Activated B cell treated with CpG ODN at 0.5 μM for 24 hours (primary cell): ENCODE measurements at regions of chr22 and their contacts with region 1.

Region 1: DNA sequence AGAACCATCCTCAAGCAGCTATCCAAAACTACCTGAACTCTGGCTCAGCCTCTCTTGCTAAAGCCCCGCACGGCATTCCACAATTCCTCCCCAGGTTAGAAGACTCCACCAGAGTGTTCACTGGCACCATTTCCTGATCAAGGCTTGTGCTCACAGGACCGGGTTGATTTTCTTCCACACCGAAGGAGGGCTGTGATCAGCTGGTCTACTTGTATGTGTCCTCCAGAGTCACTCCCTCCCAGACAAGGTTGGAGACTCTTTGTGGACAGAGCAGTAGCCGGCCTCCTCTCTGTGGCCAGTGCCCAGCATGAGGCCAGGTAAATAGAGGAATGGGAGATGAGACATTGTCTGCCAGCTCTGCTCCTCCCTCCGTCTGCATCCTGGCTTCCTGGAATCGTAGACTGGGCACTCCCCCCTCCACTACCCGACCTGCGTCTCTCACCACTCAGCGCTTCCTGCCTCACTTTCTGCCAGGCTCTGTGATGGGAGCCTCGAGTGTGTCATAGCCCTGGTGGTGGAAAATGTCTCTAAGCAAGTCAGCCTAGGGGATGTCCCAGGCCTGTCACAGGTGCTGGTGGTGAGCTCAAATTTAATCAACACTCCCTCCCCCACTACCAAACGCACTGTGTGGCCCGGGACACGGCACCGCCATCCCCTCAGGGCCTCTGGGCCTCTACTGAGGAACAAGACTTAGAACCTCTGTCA is 12.5 kb upstream of the TMPRSS6 start:
- DNase-seq: peak; percentile 62
- ATAC-seq: peak; percentile 92
- H3K4me3 Mint-ChIP-seq: peak overlapping the region; percentile 76
- H3K27ac Mint-ChIP-seq: peak overlapping the region; percentile 94
- H3K4me1 Mint-ChIP-seq: peaks cover 44% of the 10 kb centered on the region
- H3K27me3 Mint-ChIP-seq: no peaks in the 10 kb centered on the region
- CTCF ChIP-seq: no peak

Region 2: DNA sequence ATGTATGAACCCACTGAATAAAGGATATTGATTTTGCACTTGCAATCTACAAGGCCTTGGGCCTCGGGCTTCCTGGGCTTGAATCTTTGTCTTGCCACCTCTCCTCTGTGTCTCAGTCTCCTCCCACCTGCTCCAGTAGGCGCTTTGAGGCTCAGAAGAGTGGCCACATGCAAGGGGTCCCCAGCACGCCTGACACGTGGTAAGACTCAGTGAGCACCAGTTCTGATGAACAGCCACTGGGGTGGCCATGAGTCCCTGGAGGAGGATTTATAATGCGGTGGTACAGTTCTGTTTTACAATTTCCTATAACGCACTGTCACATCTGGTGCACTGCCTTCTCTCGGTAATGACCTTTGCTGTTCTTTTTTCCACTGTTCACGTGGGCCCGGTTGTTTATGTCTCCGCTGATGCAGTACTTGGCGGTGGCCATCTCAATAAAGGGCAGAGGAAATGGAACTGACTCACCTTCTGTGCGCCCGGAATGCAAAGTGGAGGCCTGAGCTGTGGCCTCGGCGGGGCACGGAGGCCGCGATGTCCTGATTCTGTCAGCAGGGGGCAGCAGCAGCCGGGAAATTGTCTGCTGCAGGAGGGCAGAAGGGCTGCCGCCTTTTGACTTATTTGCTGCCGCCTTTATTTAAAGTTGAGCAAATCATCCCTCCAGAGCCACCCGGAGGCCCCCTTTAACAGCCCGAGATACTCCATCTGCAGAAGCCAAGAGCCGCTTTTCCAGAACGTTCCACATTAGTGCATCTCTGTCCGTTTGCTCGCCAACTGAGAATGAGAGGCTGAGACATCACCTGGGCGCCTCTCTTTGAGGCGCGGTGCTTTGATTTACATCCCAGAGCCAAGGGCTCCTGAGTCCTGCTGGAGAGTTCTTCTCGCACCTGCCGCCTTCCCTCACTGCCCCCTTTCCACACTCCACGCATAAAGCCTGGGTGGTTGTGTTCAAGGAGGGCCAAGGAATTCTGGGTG is 340.1 kb before region 1 on chr22:
- CTCF ChIA-PET with region 1: no interaction called
- POLR2A ChIA-PET with region 1: no interaction called
- intact Hi-C with region 1: loop called (anchors 1 kb)
- DNase-seq: peak; percentile 87
- ATAC-seq: peak; percentile 98
- H3K4me3 Mint-ChIP-seq: peak overlapping the region; percentile 41
- H3K27ac Mint-ChIP-seq: peak overlapping the region; percentile 77
- H3K4me1 Mint-ChIP-seq: peaks cover 14% of the 10 kb centered on the region
- H3K27me3 Mint-ChIP-seq: peaks cover 3% of the 10 kb centered on the region
- CTCF ChIP-seq: peak; percentile 97

Region 3: GRCh38 chr22:37088108-37088605 is 33.9 kb before region 1 on chr22:
- CTCF ChIA-PET with region 1: interaction called, 6 read pairs
- POLR2A ChIA-PET with region 1: interaction called, 16 read pairs
- intact Hi-C with region 1: no loop called
- DNase-seq: no peak
- ATAC-seq: peak; percentile 55
- H3K4me3 Mint-ChIP-seq: peak overlapping the region; percentile 16
- H3K27ac Mint-ChIP-seq: peak overlapping the region; percentile 50
- H3K4me1 Mint-ChIP-seq: peaks cover 13% of the 10 kb centered on the region
- H3K27me3 Mint-ChIP-seq: peaks cover 7% of the 10 kb centered on the region
- CTCF ChIP-seq: no peak

Region 4: DNA sequence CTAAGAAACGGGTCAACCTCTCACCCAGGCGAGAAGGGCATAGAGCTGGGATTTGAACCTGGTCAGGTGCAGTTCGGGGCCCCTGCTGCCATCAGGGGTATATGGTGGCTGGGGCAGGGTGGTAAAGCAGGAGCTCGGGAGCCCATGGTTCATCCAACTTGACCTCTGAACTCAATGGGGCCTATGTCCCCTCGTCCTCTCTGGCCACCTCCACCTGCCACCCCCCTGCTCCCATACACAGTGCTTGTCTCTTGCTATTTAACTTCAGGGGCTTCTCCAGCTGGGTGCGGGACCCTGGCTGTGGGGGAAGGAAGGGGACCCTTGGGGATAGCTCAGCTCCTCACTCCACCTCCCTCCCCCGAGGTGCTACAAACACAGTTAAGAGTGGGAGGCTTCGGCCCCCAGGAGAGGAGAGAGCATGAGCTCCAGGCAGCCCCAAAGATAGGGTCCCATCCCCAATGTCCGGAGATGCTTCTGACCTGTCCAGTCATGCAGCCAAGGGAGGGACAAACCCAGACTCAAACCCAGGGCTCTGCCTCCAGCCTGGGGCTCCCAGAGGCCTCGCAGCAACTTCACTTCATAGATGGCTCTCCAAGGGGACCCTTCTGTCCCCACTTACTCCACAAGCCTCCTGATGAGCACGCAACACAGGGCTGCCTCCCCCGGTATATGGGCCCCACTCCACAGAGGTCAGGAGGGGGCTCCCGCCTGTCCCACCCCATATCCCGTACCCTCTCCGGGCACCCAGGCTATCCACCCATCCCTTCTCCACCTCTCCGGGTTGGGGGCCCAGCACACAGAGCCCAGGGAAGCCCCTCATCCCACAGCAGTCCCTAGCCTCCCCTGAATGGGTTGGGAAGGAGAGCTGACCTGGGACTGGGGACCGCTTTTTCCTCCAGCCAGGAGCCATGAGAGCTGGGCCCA is 27.0 kb after region 1 on chr22:
- CTCF ChIA-PET with region 1: interaction called, 6 read pairs
- POLR2A ChIA-PET with region 1: interaction called, 8 read pairs
- intact Hi-C with region 1: loop called (anchors 1 kb)
- DNase-seq: no peak
- ATAC-seq: no peak
- H3K4me3 Mint-ChIP-seq: peak overlapping the region; percentile 65
- H3K27ac Mint-ChIP-seq: no peak overlapping the region
- H3K4me1 Mint-ChIP-seq: peaks cover 25% of the 10 kb centered on the region
- H3K27me3 Mint-ChIP-seq: no peaks in the 10 kb centered on the region
- CTCF ChIP-seq: no peak

Region 5: GRCh38 chr22:37244114-37244921 is 122.3 kb after region 1 on chr22 and contains the start of gene RAC2:
- CTCF ChIA-PET with region 1: interaction called, 4 read pairs
- POLR2A ChIA-PET with region 1: interaction called, 13 read pairs
- intact Hi-C with region 1: loop called (anchors 1 kb)
- DNase-seq: peak; percentile 77
- ATAC-seq: peak; percentile 59
- H3K4me3 Mint-ChIP-seq: peak within 1 kb of the TSS; percentile 97
- H3K27ac Mint-ChIP-seq: peak within 1 kb of the TSS; percentile 90
- H3K4me1 Mint-ChIP-seq: peaks cover 74% of the 10 kb centered on the region
- H3K27me3 Mint-ChIP-seq: no peaks in the 10 kb centered on the region
- CTCF ChIP-seq: no peak
- total RNA-seq, gene RAC2: 518 and 557 TPM in 2 replicates